ENCODE measurements at regions of chr12 and their contacts with region 1.

Region 1: DNA sequence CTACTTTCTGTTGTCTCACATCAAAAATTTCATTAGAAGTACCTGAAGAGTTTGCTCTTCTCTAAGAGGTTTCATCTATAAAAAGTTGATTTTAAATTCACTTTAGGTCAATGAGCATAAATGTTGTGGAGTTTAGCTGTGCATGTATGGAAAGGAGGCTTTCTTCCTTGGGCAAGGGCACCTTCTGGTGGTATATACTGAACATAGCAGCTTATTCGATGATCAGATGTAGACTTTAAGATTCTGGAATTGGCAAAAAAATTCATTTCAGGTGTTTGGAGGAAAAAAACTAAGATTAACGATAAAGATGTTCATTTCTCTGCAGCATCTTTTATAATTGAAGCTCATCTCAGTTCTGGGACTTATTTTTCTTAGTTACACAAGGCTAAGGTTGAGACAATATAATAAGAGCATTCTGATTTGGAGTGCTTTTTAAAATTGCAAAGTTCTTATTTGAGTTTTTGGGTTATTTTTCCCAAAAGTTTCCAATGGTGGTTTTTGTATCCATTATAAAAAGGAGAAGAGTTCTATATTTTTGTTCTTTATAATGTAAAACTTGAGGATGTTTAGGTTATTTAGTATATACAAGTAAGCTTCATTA is 46.8 kb downstream of the TMEM117 start:
- DNase-seq: peak in 5 of 7 donors; percentile 21 to 62 (median 30)
- H3K4me3 ChIP-seq: no peak overlapping the region
- H3K27ac ChIP-seq: no peak overlapping the region
- H3K4me1 ChIP-seq: no peaks in the 10 kb centered on the region
- H3K27me3 ChIP-seq: no peaks in the 10 kb centered on the region
- CTCF ChIP-seq: peak; percentile 66 to 87 (median 82)
- POLR2A ChIP-seq: no peak

Region 2: GRCh38 chr12:43711348-43711747 is 171.3 kb before region 1 on chr12:
- intact Hi-C with region 1: no loop called
- DNase-seq: no peak
- H3K4me3 ChIP-seq: no peak overlapping the region
- H3K27ac ChIP-seq: no peak overlapping the region
- H3K4me1 ChIP-seq: no peaks in the 10 kb centered on the region
- H3K27me3 ChIP-seq: peaks cover 5% of the 10 kb centered on the region
- CTCF ChIP-seq: no peak
- POLR2A ChIP-seq: no peak

Region 3: DNA sequence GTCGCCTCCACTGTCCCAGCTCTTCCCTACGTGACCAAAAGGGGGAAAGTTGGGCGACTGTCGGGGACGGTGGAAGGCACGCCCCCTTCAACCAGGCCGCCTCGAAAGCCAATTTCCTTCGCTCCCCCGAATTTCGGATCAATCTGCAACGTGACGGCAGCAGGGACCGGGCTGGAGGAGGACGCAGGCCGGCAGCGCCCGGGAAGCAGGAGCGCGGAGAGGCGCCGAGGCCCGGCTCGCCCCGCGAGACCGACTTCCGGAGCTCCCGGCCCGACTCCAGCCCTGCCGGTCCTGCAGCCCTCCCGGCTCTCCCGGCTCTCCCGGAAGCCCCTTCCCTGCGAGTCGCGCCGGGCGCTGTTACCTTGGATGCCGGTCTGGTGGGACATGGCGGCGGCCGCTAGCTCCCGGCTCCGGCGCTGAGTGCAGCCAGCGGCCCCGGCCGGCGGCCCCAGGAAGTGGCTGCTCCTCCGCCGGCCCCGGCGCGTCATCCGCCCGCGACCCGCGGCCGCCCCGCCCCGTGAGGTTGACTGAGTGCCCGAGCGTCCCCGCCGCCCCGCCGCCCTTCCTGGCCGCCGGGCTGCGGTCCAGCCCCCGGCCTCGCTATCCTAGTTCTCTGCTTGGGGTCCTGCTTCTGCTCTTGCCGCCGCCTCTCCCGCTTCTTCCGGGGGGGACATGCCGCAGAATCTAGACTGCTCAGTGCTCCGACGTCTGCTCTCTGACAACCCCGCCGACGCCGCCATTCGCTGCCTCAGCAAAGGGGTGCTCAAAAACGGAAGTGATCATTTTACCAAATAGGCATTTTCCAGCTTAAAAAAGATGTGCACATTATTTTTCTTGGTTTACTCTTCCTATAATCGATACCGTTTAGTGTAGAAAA is 76.6 kb before region 1 on chr12 and contains the start of gene TWF1:
- intact Hi-C with region 1: loop called in 1 of 2 experiments (anchors 10 kb)
- DNase-seq: peak; percentile 83 to 91 (median 87)
- H3K4me3 ChIP-seq: peak within 1 kb of the TSS; percentile 43 to 98 (median 54)
- H3K27ac ChIP-seq: peak within 1 kb of the TSS; percentile 94 to 100 (median 98)
- H3K4me1 ChIP-seq: peaks cover 0 to 37% of the 10 kb centered on the region in 2 donors
- H3K27me3 ChIP-seq: no peaks in the 10 kb centered on the region
- CTCF ChIP-seq: peak in 5 of 6 experiments; percentile 16 to 54 (median 40)
- POLR2A ChIP-seq: peak; percentile 81 to 87
- total RNA-seq, gene TWF1: 54.6 to 116 (median 90.1) TPM

Region 4: GRCh38 chr12:43835656-43836474 is 46.8 kb before region 1 on chr12 and contains the start of gene TMEM117:
- intact Hi-C with region 1: no loop called
- DNase-seq: peak; percentile 60 to 80 (median 72)
- H3K4me3 ChIP-seq: peak within 1 kb of the TSS; percentile 54 to 95 (median 58)
- H3K27ac ChIP-seq: peak within 1 kb of the TSS; percentile 75 to 100 (median 91)
- H3K4me1 ChIP-seq: peaks cover 5 to 14% of the 10 kb centered on the region in 2 donors
- H3K27me3 ChIP-seq: no peaks in the 10 kb centered on the region
- CTCF ChIP-seq: no peak
- POLR2A ChIP-seq: peak; percentile 60 to 81
- total RNA-seq, gene TMEM117: 3.8 to 38.5 (median 7.9) TPM

Region 5: GRCh38 chr12:44253338-44253856 is 370.7 kb after region 1 on chr12:
- intact Hi-C with region 1: no loop called
- DNase-seq: no peak
- H3K4me3 ChIP-seq: no peak overlapping the region
- H3K27ac ChIP-seq: no peak overlapping the region
- H3K4me1 ChIP-seq: no peaks in the 10 kb centered on the region
- H3K27me3 ChIP-seq: no peaks in the 10 kb centered on the region
- CTCF ChIP-seq: no peak
- POLR2A ChIP-seq: no peak